Head of caudate nucleus (tissue), 42 donors: ENCODE measurements at regions of chr1 and their contacts with region 1.

Region 1: DNA sequence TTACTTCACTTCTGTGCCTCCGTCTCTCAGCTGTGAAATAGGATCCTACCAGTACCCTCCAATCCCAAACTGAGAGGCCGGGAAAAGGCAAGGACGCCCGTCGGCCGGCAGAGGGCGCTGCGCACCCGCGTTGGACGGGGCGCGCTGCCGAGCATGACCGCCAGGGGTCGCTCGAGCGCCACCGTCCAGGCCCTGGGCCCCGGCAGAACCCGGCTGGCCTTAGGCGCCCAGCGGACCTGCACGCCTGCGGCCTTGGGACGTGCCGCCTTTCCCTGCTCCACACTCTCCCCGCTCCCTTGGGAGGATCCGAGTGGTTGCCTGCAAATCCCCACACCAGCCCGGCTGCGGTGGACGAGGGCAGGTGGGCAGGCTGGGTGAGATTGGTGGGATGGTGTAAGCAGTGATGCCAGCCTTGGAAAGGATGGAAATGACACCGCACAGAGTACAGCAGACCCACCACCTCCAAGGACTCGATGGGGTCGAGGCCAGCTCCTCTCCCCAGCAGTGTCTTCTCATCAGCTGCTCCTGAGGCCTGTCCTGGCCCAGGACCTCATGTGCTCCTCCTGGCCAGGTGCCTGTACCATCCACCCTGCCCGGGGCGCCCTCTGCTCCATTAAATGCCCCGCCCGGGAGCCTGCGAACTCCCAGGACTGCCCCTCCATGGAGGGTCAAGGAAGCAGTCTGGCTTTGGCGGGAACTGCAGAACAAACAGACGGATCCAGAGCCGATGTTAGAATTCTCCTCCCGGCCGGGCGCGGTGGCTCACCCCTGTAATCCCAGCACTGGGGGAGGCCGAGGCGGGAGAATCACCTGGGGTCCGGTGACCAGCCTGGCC is 47.4 kb upstream of the LBR start:
- DNase-seq: peak in 40 of 42 donors; percentile 30 to 86 (median 68)

Region 2: DNA sequence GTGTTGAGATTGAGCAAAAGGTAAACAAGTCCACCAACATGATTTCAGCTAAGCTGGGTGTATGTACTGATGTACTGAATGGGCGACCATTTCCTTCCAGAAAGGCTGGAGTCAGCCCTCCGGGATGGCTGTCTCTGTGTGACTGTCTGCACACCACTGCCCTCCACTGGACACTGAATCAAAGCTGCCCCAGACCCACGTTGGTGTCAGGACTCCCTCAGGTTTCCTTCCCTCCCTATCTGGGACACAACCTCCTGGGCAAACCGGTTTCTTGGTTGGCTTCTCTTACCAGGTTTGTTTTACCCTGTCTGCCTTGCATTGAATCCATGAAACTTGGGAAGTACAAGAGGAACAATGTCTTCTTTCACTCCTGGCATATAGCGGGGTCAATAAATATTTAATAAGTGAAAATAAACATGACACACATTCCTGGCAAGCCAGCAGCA is 297.1 kb after region 1 on chr1:
- intact Hi-C with region 1: loop called (anchors 1 kb)
- DNase-seq: peak; percentile 65 to 93 (median 83)